K562 (cell line): ENCODE measurements at regions of chr12 and their contacts with region 1.

Region 1: GRCh38 chr12:76790564-76791552 is 26.9 kb downstream of the ZDHHC17 start:
- DNase-seq: peak; percentile 29 to 41 (median 31)
- ATAC-seq: peak; percentile 29; the same call in 1 of the 3 replicates
- H3K4me3 ChIP-seq: no peak overlapping the region
- H3K27ac ChIP-seq: no peak overlapping the region
- H3K4me1 ChIP-seq: peaks cover 4 to 7% of the 10 kb centered on the region in 2 experiments; a peak in 3 of 5 replicates
- H3K27me3 ChIP-seq: no peaks in the 10 kb centered on the region
- CTCF ChIP-seq: peak in 2 of 3 experiments; percentile 60 to 76; a peak in 4 of 6 replicates
- EP300 ChIP-seq: no peak
- POLR2A ChIP-seq: no peak
- RAD21 ChIP-seq: peak; percentile 90 to 91

Region 2: GRCh38 chr12:76633415-76633814 is 157.4 kb before region 1 on chr12:
- CTCF ChIA-PET with region 1: interaction called, 13 read pairs
- POLR2A ChIA-PET with region 1: no interaction called
- in situ Hi-C with region 1: no loop called
- intact Hi-C with region 1: loop called (anchors 2 kb)
- DNase-seq: peak; percentile 12 to 52 (median 28)
- ATAC-seq: no peak
- H3K4me3 ChIP-seq: no peak overlapping the region
- H3K27ac ChIP-seq: no peak overlapping the region
- H3K4me1 ChIP-seq: peaks cover 8 to 24% of the 10 kb centered on the region in 2 experiments; a peak in 4 of 5 replicates
- H3K27me3 ChIP-seq: no peaks in the 10 kb centered on the region
- CTCF ChIP-seq: no peak
- EP300 ChIP-seq: peak; percentile 42; the same call in 1 of the 2 replicates
- POLR2A ChIP-seq: no peak
- RAD21 ChIP-seq: no peak

Region 3: GRCh38 chr12:76685246-76685678 is 105.6 kb before region 1 on chr12:
- CTCF ChIA-PET with region 1: no interaction called
- POLR2A ChIA-PET with region 1: no interaction called
- in situ Hi-C with region 1: no loop called
- intact Hi-C with region 1: loop called (anchors 2 kb)
- DNase-seq: no peak
- ATAC-seq: peak; percentile 39
- H3K4me3 ChIP-seq: no peak overlapping the region
- H3K27ac ChIP-seq: no peak overlapping the region
- H3K4me1 ChIP-seq: no peaks in the 10 kb centered on the region; a peak in 1 of 5 replicates
- H3K27me3 ChIP-seq: peaks cover 0 to 4% of the 10 kb centered on the region in 2 experiments; a peak in 1 of 5 replicates
- CTCF ChIP-seq: no peak
- EP300 ChIP-seq: no peak
- POLR2A ChIP-seq: no peak
- RAD21 ChIP-seq: no peak

Region 4: DNA sequence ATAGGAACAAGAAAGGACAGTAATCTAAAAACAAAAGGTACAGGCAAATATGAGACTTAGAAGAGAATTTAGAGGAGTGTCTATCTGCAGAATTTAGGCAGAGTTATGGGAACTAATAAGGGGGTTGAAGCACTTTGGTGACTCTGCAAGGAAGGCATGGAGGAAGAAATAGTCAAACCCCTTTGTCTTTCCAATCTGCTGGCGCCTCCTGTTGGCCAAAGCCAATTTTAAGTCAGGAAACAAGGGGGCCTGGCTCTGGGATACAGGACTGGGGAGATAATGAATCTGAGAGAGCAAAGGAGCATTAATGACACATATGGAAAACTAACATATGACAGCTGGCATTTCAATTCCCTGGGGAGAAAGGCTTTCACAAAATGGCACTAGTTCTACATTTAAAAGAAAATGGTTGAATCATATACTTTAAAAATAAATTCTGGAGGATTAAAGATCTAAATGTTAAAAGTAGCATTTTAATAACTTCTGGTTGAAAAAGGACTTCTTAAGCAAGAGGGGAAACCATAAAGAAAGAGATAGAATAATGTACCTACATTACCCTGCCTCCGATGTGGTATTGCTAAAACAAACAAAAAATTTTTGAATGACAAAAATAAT is 136.4 kb after region 1 on chr12:
- CTCF ChIA-PET with region 1: no interaction called
- POLR2A ChIA-PET with region 1: no interaction called
- in situ Hi-C with region 1: no loop called
- intact Hi-C with region 1: loop called (anchors 2 kb)
- DNase-seq: peak; percentile 35 to 69 (median 48)
- ATAC-seq: peak; percentile 89
- H3K4me3 ChIP-seq: no peak overlapping the region
- H3K27ac ChIP-seq: no peak overlapping the region
- H3K4me1 ChIP-seq: no peaks in the 10 kb centered on the region
- H3K27me3 ChIP-seq: peaks cover 0 to 5% of the 10 kb centered on the region in 2 experiments; a peak in 3 of 5 replicates
- CTCF ChIP-seq: peak; percentile 52 to 74 (median 65)
- EP300 ChIP-seq: no peak
- POLR2A ChIP-seq: no peak
- RAD21 ChIP-seq: peak; percentile 48 to 85

Region 5: GRCh38 chr12:77010691-77011548 is 220.1 kb after region 1 on chr12:
- CTCF ChIA-PET with region 1: no interaction called
- POLR2A ChIA-PET with region 1: no interaction called
- in situ Hi-C with region 1: no loop called
- intact Hi-C with region 1: loop called (anchors 2 kb)
- DNase-seq: peak; percentile 70 to 81 (median 72)
- ATAC-seq: peak; percentile 96
- H3K4me3 ChIP-seq: no peak overlapping the region
- H3K27ac ChIP-seq: no peak overlapping the region
- H3K4me1 ChIP-seq: no peaks in the 10 kb centered on the region; a peak in 1 of 5 replicates
- H3K27me3 ChIP-seq: peaks cover 0 to 3% of the 10 kb centered on the region in 2 experiments; a peak in 2 of 5 replicates
- CTCF ChIP-seq: peak; percentile 84 to 92 (median 85)
- EP300 ChIP-seq: no peak
- POLR2A ChIP-seq: no peak
- RAD21 ChIP-seq: peak; percentile 62 to 76